Dendritic cell treated with granulocyte-macrophage colony-stimulating factor and Interleukin-4, amounts not matched to agents 40 ng/mL and 50 ng/mL, for 4 days (primary cell): ENCODE measurements at regions of chr7 and their contacts with region 1.

Region 1: GRCh38 chr7:66681491-66682349 is 53.0 kb downstream of the KCTD7 start:
- H3K4me3 Mint-ChIP-seq: peak overlapping the region; percentile 98
- H3K27ac Mint-ChIP-seq: peak overlapping the region; percentile 97
- H3K4me1 Mint-ChIP-seq: peaks cover 61% of the 10 kb centered on the region
- H3K27me3 Mint-ChIP-seq: no peaks in the 10 kb centered on the region

Region 2: DNA sequence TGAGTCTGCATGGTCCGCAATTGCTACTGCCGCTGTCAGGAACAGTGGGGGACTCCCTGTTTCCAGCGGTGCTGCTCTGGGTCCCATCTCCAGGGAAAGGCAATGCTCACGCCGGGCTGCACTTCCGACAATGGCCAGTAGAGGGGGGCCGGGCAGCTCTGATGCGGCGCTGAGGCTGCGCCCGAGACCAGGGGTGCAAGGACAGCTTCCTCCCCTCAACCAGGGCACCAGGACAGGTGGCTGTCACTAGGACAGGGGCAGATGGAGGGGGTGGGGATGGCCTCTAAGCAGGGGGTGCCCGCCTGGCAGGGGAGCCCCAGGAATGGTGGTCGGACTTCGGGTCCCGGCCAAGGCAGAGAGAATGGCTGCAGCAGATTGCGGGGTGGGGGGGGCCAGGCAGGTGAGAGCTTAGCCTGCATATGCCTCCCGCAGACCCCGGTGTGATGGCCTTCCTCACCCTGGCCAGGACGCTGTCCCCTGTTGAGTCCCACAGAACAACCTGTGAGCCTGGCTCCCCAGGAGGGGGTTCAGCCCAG is 124.0 kb before region 1 on chr7:
- intact Hi-C with region 1: loop called (anchors 10 kb)
- H3K4me3 Mint-ChIP-seq: no peak overlapping the region
- H3K27ac Mint-ChIP-seq: no peak overlapping the region
- H3K4me1 Mint-ChIP-seq: no peaks in the 10 kb centered on the region
- H3K27me3 Mint-ChIP-seq: no peaks in the 10 kb centered on the region

Region 3: DNA sequence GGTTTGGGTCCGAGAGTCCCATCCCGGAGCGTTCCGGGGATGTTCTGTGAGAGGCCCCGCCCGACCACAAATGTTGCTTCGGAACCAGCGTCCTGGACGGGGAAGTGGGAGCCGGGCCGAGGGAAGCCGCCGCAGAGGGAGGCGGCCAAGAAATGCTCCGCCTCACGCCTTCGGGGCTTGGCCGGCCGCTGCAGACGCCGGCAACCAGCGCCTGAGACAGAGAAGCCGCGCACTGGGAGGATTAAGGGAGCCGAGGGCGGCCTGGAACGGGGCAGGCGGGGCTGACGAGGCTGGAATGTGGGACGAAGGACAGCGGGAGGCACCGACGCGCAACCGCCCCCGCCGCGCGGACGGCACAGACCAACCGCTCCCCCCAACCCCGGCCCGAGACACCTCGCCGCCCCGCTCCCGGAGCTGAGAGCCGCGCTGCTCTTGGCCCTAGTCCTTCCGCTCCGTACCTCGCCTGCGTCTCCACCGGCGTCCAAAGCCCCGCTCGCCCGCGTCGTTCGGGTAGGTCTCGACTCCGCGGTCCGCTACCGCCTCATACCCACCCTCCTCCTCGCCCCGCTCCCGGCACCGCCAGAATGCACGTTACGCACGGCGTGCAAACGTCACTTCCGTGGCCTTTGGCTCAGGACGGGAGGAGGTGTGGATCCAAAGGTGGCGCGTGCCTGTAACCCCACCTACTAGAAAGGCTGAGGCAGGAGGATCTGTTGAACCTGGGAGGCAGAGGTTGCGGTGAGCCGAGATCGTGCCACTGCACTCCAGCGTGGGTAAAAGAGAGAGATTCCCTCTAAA is 89.7 kb before region 1 on chr7:
- intact Hi-C with region 1: loop called (anchors 2 kb)
- H3K4me3 Mint-ChIP-seq: peak overlapping the region; percentile 87
- H3K27ac Mint-ChIP-seq: peak overlapping the region; percentile 93
- H3K4me1 Mint-ChIP-seq: peaks cover 42% of the 10 kb centered on the region
- H3K27me3 Mint-ChIP-seq: peaks cover 7% of the 10 kb centered on the region

Region 4: DNA sequence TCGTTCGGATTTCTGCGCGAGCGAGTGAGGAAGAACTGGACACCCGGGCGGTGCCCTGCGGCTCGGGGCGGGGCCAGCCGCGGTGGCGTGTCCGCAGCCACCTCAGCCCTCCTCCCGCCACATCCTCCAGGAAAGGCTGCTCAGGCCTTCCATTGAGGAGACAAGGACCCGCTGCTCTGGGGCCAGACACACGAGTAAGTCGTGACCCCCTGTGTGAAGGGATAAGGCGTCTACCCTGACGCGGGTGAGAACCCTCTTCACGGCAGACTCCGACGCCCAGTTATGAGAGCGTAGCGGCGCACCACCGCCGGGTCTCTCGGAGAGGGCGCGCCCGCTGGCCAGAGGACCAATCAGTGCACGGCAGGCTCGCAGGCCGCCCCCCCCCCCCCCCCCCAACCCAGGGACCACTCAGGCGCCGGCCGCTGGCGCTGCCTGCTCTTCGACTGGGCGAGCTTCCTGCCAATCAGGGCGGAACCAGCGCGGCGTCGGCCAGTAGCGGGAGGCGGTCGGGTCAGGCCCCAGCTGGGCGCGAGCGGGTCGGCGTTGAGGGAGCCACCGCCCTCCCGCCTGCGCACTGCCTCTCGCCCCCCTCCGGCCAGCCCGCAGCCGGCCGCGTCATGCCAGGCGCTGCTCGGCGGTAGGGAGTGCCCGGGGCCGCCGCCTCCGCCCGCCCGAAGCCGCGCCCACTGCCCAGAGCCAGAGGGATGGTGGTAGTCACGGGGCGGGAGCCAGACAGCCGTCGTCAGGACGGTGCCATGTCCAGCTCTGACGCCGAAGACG is 53.2 kb before region 1 on chr7 and contains the start of gene KCTD7:
- intact Hi-C with region 1: loop called (anchors 1 kb)
- H3K4me3 Mint-ChIP-seq: peak within 1 kb of the TSS; percentile 85
- H3K27ac Mint-ChIP-seq: peak within 1 kb of the TSS; percentile 98
- H3K4me1 Mint-ChIP-seq: peaks cover 53% of the 10 kb centered on the region
- H3K27me3 Mint-ChIP-seq: peaks cover 21% of the 10 kb centered on the region

Region 5: DNA sequence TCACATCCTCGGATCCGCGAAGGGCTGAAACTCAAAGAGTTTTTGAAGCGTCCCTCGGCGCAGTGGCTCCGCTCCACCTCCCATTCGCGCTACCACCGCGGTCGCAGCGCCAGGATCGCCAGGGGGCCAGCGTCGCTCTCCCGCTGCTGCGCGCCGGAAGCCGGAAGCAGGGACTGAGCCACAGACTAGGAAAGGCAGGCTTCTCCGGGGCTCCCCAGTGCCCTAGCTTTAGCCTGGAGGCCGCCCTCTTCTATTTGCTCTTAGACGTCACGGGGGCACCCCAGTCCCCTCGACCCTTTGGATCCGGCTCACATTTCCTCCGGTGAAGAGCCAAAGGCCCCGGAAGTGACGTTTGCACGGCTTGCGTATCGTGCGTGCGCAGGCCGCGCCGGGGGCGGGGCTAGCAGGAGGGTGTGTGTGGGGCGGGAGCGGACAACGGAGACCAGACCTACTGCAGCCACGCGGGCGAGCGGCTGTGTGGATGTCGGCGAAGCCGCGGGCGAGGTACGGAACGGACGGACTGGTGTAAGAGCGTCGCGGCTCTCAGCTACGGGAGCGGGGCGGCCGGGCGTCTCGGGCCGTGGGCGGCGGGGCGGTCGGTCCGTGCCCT is 27.5 kb before region 1 on chr7:
- intact Hi-C with region 1: loop called (anchors 1 kb)
- H3K4me3 Mint-ChIP-seq: peak overlapping the region; percentile 96
- H3K27ac Mint-ChIP-seq: peak overlapping the region; percentile 93
- H3K4me1 Mint-ChIP-seq: peaks cover 39% of the 10 kb centered on the region
- H3K27me3 Mint-ChIP-seq: no peaks in the 10 kb centered on the region

Region 6: GRCh38 chr7:66740302-66740979 is 58.7 kb after region 1 on chr7 and contains the start of gene RABGEF1:
- intact Hi-C with region 1: loop called (anchors 1 kb)
- H3K4me3 Mint-ChIP-seq: peak within 1 kb of the TSS; percentile 96
- H3K27ac Mint-ChIP-seq: peak within 1 kb of the TSS; percentile 99
- H3K4me1 Mint-ChIP-seq: peaks cover 47% of the 10 kb centered on the region
- H3K27me3 Mint-ChIP-seq: no peaks in the 10 kb centered on the region